Posterior vena cava (tissue), 2 donors: ENCODE measurements at regions of chr3 and their contacts with region 1.

Region 1: DNA sequence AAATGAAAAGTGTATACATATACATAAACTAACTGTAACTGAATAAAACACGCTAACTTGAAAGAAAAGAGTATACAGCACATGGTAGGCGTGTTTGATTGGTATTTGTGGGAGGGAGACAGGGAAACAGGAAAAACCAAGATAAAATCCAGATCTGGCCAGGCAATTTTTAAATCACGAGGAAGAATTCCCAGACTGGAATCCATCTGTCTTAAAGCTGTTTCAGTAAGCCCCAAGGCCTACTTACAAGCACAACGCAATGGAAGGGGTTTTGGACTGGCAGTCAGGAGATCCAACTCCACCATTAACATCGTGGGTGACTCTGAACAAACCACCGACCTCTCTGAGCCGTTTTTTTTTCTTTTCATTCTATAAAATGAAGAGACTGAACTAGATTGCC is 195.8 kb downstream of the OSBPL10 start:
- DNase-seq: no peak

Region 2: GRCh38 chr3:31760654-31761053 is 24.6 kb before region 1 on chr3:
- intact Hi-C with region 1: loop called in 1 of 2 experiments (anchors 2 kb)
- DNase-seq: no peak